Right ventricle myocardium superior (tissue), 1 donor: ENCODE measurements at regions of chr6 and their contacts with region 1.

Region 1: GRCh38 chr6:9250852-9251251 is 815.5 kb upstream of the SLC35B3 start:
- DNase-seq: no peak
- ATAC-seq: peak; percentile 59

Region 2: GRCh38 chr6:8570256-8570920 is 680.5 kb before region 1 on chr6:
- intact Hi-C with region 1: no loop called
- DNase-seq: no peak
- ATAC-seq: no peak

Region 3: DNA sequence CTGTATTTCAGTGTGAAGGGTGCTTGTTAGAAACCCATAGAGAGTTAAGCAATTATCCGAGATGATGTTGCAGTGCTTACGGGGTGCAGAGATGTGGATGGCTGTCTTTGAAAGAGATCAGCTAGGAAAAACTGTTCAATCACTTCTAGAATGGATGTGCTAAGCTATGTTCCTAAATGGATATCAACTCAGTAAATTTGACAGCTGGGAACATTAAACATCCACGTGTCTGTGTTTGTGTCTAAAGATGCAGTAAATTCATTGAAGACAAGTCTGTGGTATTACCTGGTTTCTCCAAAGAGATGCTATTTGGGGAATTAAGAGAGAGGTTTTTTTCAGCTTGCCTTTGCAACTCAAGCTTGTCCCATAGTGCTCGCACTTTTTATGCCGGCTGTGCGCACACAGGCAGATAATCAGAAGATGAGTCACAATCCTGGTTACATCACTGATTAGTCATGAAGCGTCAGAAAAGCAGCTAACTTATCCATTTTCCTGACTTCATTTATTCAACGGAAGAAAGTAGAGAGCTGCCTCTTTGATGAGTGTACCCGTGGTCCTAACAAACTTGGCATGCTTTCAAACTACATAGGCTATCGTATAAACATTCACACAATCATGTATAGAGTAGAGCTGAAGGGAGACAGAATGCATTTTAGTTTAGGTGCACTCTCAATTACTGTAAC is 123.8 kb before region 1 on chr6:
- intact Hi-C with region 1: no loop called
- DNase-seq: no peak
- ATAC-seq: no peak

Region 4: GRCh38 chr6:9412951-9413559 is 162.2 kb after region 1 on chr6:
- intact Hi-C with region 1: loop called (anchors 5 kb)
- DNase-seq: peak; percentile 36
- ATAC-seq: peak; percentile 77